Activated CD4-positive, alpha-beta memory T cell treated with anti-CD3 and anti-CD28 coated beads, Interleukin-2, amount 10 ng/mL, durations not matched to agents 7 days and 5 days (primary cell): ENCODE measurements at regions of chr12 and their contacts with region 1.

Region 1: GRCh38 chr12:123713398-123713797 is 1.2 kb downstream of the ATP6V0A2 start:
- DNase-seq: peak; percentile 22
- H3K4me3 Mint-ChIP-seq: peak overlapping the region; percentile 89
- H3K27ac Mint-ChIP-seq: peak overlapping the region; percentile 81
- H3K4me1 Mint-ChIP-seq: peaks cover 40% of the 10 kb centered on the region
- H3K27me3 Mint-ChIP-seq: no peaks in the 10 kb centered on the region

Region 2: GRCh38 chr12:123633379-123634141 is 79.8 kb before region 1 on chr12 and contains the starts of genes EIF2B1 and GTF2H3:
- CTCF ChIA-PET with region 1: interaction called, 3 read pairs
- POLR2A ChIA-PET with region 1: interaction called, 25 read pairs
- DNase-seq: peak; percentile 98
- H3K4me3 Mint-ChIP-seq: peak within 1 kb of the TSS; percentile 93
- H3K27ac Mint-ChIP-seq: peak within 1 kb of the TSS; percentile 82
- H3K4me1 Mint-ChIP-seq: peaks cover 31% of the 10 kb centered on the region
- H3K27me3 Mint-ChIP-seq: no peaks in the 10 kb centered on the region
- total RNA-seq, gene EIF2B1: 55.9 to 57.0 TPM
- total RNA-seq, gene GTF2H3: 36.6 to 40.3 TPM

Region 3: GRCh38 chr12:123645878-123646277 is 67.5 kb before region 1 on chr12:
- CTCF ChIA-PET with region 1: no interaction called
- POLR2A ChIA-PET with region 1: no interaction called
- DNase-seq: no peak
- H3K4me3 Mint-ChIP-seq: no peak overlapping the region
- H3K27ac Mint-ChIP-seq: no peak overlapping the region
- H3K4me1 Mint-ChIP-seq: no peaks in the 10 kb centered on the region
- H3K27me3 Mint-ChIP-seq: no peaks in the 10 kb centered on the region

Region 4: GRCh38 chr12:123670882-123671728 is 42.3 kb before region 1 on chr12 and contains the start of gene TCTN2:
- CTCF ChIA-PET with region 1: interaction called, 7 read pairs
- POLR2A ChIA-PET with region 1: interaction called, 17 read pairs
- DNase-seq: peak; percentile 96
- H3K4me3 Mint-ChIP-seq: peak within 1 kb of the TSS; percentile 79
- H3K27ac Mint-ChIP-seq: peak within 1 kb of the TSS; percentile 21
- H3K4me1 Mint-ChIP-seq: peaks cover 16% of the 10 kb centered on the region
- H3K27me3 Mint-ChIP-seq: no peaks in the 10 kb centered on the region
- total RNA-seq, gene TCTN2: 3.2 to 3.6 TPM

Region 5: DNA sequence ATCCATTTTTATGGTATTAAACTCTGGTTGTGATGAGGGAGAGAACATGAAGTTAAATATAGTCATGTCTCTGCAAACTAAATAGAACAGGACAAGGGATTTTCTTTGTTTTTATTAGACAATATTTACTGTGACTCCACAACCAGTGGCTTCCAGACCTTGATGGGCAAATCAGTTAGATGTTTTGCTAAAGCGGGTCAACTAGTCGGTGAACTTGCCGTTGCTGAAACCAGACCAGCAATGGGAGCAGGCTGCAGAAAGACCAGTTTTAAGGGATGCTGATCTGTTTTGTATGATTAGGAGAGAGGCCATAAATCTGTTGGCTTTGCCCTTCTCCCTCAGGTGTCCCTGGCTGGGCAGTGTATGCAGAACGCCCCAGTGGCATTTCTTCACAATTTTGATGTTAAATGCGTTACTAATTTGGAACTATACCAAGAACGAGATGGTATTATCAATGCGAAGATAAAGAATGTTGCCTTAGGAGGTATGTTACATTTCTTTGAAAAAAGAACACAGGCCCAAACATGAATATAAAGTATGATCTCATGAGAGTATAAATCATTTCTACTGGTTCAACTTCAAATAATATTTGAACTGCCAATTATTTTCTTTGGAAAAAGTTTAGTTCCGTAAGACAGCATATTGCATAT is 23.1 kb before region 1 on chr12:
- CTCF ChIA-PET with region 1: no interaction called
- POLR2A ChIA-PET with region 1: no interaction called
- DNase-seq: no peak
- H3K4me3 Mint-ChIP-seq: no peak overlapping the region
- H3K27ac Mint-ChIP-seq: no peak overlapping the region
- H3K4me1 Mint-ChIP-seq: peaks cover 4% of the 10 kb centered on the region
- H3K27me3 Mint-ChIP-seq: no peaks in the 10 kb centered on the region

Region 6: DNA sequence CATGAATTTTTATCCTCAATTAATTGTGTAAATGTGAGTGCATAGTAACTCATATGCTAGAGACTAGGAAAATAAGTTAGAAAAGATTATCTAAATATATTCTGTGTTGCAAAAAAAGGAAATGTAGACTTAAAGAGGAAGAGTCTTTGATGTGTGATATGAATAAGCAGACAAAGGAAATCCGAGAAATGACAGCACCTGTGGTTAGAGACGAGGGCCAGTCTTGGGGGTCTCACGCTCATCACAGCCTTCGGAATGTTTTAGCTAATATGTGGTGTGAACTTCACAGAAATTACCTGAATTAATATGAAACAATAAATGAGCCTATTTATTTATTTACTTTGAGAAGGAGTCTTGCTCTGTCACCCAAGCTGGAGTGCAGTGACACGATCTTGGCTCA is 10.4 kb after region 1 on chr12:
- CTCF ChIA-PET with region 1: interaction called, 5 read pairs
- POLR2A ChIA-PET with region 1: interaction called, 25 read pairs
- DNase-seq: no peak
- H3K4me3 Mint-ChIP-seq: no peak overlapping the region
- H3K27ac Mint-ChIP-seq: no peak overlapping the region
- H3K4me1 Mint-ChIP-seq: peaks cover 29% of the 10 kb centered on the region
- H3K27me3 Mint-ChIP-seq: no peaks in the 10 kb centered on the region

Region 7: GRCh38 chr12:123983822-123984485 is 270.6 kb after region 1 on chr12:
- CTCF ChIA-PET with region 1: no interaction called
- POLR2A ChIA-PET with region 1: no interaction called
- DNase-seq: peak; percentile 55
- H3K4me3 Mint-ChIP-seq: no peak overlapping the region
- H3K27ac Mint-ChIP-seq: no peak overlapping the region
- H3K4me1 Mint-ChIP-seq: peaks cover 6% of the 10 kb centered on the region
- H3K27me3 Mint-ChIP-seq: no peaks in the 10 kb centered on the region

Region 8: GRCh38 chr12:124073304-124074035 is 360.1 kb after region 1 on chr12:
- CTCF ChIA-PET with region 1: no interaction called
- POLR2A ChIA-PET with region 1: no interaction called
- DNase-seq: no peak
- H3K4me3 Mint-ChIP-seq: no peak overlapping the region
- H3K27ac Mint-ChIP-seq: no peak overlapping the region
- H3K4me1 Mint-ChIP-seq: peaks cover 18% of the 10 kb centered on the region
- H3K27me3 Mint-ChIP-seq: peaks cover 17% of the 10 kb centered on the region